Breast epithelium (tissue), 4 donors: ENCODE measurements at regions of chr1 and their contacts with region 1.

Region 1: DNA sequence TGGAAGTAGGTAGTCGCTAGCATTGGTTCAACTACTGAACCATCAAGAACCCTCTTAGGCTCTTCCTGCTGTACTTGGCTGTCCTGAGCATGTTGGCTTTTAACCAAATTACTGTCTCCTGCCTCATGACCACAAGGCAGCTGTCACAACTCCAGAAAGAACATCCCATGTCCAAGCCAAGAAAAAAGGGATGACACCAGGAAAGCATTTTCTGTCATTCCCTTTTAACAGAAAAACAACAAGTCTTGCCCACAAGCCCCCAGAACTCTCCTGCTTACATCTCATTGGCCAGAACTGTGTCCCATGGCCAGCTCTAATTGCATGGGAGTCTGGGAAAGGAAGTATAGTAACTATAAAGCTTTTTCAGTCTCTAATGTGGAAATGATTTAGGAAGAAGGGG is 2.4 kb upstream of the RNU5D-1 start:
- DNase-seq: peak in 1 of 2 donors; percentile 45
- H3K4me3 ChIP-seq: no peak overlapping the region
- H3K27ac ChIP-seq: peak overlapping the region; percentile 46 to 67
- H3K4me1 ChIP-seq: no peaks in the 10 kb centered on the region
- H3K27me3 ChIP-seq: no peaks in the 10 kb centered on the region
- CTCF ChIP-seq: no peak
- POLR2A ChIP-seq: no peak

Region 2: DNA sequence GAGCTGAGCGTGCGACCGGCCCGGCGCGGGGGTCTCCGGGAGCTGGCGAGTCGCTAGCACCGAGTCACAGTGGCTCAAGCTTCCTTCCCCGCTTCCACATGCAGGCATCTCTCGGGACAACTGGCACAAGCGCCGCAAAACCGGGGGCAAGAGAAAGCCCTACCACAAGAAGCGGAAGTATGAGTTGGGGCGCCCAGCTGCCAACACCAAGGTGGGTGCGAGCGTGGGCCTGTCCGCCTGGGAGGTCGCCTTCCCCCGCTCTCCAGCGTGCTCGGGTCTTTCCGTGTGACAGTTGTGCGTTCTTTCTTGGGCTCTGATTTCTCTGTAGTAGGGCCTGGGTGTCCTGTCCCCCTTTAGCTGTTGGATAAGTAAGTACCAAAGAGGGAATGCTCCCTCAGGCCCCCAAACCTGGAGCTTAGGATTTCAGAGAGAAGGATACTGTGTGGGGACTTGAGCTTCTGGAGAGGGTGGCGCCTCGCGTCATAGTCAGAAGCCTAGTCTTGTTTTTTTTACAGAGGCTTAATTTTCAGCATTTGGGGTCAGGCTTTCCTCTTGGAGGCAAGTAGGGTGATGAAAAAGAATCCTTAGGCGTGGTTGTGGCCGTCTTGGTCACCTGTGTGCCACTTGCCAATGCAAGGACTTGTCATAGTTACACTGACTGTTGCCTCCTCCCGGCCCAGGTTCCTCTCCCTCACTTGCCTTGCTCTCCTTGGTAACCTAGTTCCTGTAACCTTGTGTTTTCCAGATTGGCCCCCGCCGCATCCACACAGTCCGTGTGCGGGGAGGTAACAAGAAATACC is 42.8 kb after region 1 on chr1:
- intact Hi-C with region 1: loop called (anchors 2 kb)
- DNase-seq: no peak
- H3K4me3 ChIP-seq: peak overlapping the region; percentile 81 to 87 (median 85)
- H3K27ac ChIP-seq: peak overlapping the region; percentile 96 to 99
- H3K4me1 ChIP-seq: peaks cover 0 to 5% of the 10 kb centered on the region in 2 donors
- H3K27me3 ChIP-seq: no peaks in the 10 kb centered on the region
- CTCF ChIP-seq: no peak
- POLR2A ChIP-seq: no peak